Activated CD4-positive, alpha-beta T cell treated with anti-CD3 and anti-CD28 coated beads for 36 hours (primary cell): ENCODE measurements at regions of chr19 and their contacts with region 1.

Region 1: DNA sequence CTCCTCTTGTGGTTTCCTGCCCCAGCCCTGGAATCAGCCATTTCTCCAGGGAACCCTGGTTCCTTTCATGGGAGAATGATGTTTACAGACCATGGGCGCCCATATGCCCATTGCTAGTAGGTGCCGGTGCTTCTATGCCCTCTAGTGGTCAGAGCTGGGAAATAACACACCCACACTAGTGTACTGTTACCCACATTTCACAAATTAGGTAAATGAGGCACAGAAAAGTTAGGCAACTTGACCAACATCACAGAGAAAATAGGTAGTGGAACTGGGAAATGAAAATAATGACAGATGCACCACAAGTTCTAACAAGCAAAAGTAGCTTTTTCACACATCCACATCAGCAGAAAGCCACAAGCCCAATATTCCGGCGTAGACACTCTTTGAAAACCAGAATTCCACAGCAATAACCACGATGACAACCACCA is 1.3 kb upstream of the CEACAM3 start:
- DNase-seq: peak; percentile 77
- ATAC-seq: peak; percentile 94
- H3K4me3 Mint-ChIP-seq: no peak overlapping the region
- H3K27ac Mint-ChIP-seq: no peak overlapping the region
- H3K4me1 Mint-ChIP-seq: no peaks in the 10 kb centered on the region
- H3K27me3 Mint-ChIP-seq: peaks cover 23% of the 10 kb centered on the region

Region 2: DNA sequence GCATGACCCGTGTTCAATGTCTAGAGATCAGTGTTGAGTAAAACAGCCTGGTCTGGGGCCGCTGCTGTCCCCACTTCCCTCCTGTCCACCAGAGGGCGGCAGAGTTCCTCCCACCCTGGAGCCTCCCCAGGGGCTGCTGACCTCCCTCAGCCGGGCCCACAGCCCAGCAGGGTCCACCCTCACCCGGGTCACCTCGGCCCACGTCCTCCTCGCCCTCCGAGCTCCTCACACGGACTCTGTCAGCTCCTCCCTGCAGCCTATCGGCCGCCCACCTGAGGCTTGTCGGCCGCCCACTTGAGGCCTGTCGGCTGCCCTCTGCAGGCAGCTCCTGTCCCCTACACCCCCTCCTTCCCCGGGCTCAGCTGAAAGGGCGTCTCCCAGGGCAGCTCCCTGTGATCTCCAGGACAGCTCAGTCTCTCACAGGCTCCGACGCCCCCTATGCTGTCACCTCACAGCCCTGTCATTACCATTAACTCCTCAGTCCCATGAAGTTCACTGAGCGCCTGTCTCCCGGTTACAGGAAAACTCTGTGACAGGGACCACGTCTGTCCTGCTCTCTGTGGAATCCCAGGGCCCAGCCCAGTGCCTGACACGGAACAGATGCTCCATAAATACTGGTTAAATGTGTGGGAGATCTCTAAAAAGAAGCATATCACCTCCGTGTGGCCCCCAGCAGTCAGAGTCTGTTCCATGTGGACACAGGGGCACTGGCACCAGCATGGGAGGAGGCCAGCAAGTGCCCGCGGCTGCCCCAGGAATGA is 88.1 kb before region 1 on chr19:
- CTCF ChIA-PET with region 1: interaction called, 14 read pairs
- POLR2A ChIA-PET with region 1: no interaction called
- intact Hi-C with region 1: no loop called
- DNase-seq: peak; percentile 84
- ATAC-seq: peak; percentile 96
- H3K4me3 Mint-ChIP-seq: peak overlapping the region; percentile 28
- H3K27ac Mint-ChIP-seq: no peak overlapping the region
- H3K4me1 Mint-ChIP-seq: peaks cover 3% of the 10 kb centered on the region
- H3K27me3 Mint-ChIP-seq: peaks cover 26% of the 10 kb centered on the region

Region 3: DNA sequence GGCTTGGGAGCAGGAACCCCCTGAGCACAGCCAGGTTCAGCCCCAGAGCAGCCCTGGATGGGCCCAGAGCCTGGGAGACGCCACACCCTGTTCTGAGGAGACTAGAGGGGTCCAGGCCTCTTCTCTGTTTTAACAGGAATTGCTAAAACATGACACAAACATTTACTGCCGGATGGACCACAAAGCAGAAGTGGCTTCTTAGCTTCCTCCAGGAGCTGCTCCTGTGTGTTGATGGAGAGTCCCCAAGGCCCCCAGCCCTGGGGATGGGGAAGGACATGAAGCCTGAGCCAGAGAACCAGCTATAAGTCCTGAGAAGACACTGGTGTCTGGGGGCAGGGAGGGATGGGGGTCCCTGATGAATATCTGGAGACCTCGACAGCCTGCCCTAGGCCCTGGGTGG is 16.0 kb after region 1 on chr19:
- CTCF ChIA-PET with region 1: interaction called, 43 read pairs
- POLR2A ChIA-PET with region 1: no interaction called
- intact Hi-C with region 1: no loop called
- DNase-seq: no peak
- ATAC-seq: no peak
- H3K4me3 Mint-ChIP-seq: no peak overlapping the region
- H3K27ac Mint-ChIP-seq: no peak overlapping the region
- H3K4me1 Mint-ChIP-seq: no peaks in the 10 kb centered on the region
- H3K27me3 Mint-ChIP-seq: peaks cover 6% of the 10 kb centered on the region

Region 4: DNA sequence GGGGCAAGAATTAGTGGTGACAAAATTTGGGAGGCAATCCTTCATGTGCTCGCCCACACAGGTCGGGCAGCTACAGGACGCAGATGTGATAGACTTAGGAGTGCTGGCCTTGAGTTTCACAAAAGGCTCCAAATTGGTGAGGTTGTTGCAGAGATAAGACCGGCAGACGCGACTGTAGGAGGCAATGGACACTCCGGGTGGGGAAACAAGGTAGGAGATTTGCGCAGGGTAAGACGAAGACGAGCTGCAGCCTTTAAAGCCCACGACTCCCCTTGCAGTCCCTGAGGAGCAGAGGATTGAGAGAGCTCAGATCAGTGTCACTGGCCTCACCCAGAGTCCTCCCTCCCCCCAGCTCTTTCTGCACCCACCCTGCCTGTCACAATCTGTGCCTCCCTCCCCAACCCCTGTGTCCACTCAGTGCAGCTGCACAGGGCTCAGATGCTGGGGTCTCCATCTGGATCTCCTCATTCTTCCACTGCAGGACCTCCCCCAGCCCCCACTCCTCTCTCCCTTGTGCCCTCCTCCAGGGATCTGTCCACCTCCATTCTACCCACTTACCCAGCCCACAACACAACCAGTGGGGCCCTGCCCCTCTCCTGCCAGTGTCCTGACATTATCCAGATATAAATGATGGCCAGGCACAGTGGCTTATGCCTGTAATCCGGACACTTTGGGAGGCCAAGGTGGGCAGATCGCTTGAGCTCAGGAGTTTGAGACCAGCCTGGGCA is 43.1 kb after region 1 on chr19:
- CTCF ChIA-PET with region 1: interaction called, 34 read pairs
- POLR2A ChIA-PET with region 1: no interaction called
- intact Hi-C with region 1: loop called in 1 of 2 experiments (anchors 5 kb)
- DNase-seq: no peak
- ATAC-seq: no peak
- H3K4me3 Mint-ChIP-seq: no peak overlapping the region
- H3K27ac Mint-ChIP-seq: no peak overlapping the region
- H3K4me1 Mint-ChIP-seq: no peaks in the 10 kb centered on the region
- H3K27me3 Mint-ChIP-seq: peaks cover 19% of the 10 kb centered on the region

Region 5: DNA sequence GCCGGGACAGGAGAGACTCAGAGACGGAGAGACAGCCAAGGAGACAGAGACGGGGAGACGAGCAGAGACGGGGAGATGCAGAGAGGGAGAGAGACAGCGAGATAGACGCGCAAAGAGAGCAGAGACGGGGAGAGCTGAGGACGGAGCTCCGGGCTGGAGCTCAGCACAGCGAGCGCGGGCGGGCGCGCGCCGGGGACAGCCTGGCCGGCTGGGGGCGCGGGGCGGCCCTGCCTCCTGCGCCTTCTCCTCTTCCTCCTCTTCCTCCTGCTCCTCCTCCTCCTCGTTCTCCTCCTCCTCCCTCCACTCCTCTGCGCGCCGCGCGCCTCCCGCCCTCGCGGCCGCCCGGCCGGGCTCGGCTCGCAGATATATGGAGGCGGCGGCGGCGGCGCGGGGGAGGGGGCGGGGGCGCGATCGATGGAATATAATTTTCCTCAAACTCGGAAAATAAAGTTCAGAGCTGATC is 133.2 kb after region 1 on chr19 and contains the start of gene ERFL:
- CTCF ChIA-PET with region 1: no interaction called
- POLR2A ChIA-PET with region 1: no interaction called
- intact Hi-C with region 1: no loop called
- DNase-seq: peak; percentile 56
- ATAC-seq: peak; percentile 54
- H3K4me3 Mint-ChIP-seq: peak within 1 kb of the TSS; percentile 77
- H3K27ac Mint-ChIP-seq: peak within 1 kb of the TSS; percentile 81
- H3K4me1 Mint-ChIP-seq: peaks cover 20% of the 10 kb centered on the region
- H3K27me3 Mint-ChIP-seq: peaks cover 1% of the 10 kb centered on the region
- total RNA-seq, gene ERFL: 1.7 to 1.9 TPM

Region 6: GRCh38 chr19:41959056-41960053 is 164.3 kb after region 1 on chr19 and contains the start of gene RABAC1:
- CTCF ChIA-PET with region 1: interaction called, 4 read pairs
- POLR2A ChIA-PET with region 1: no interaction called
- intact Hi-C with region 1: loop called (anchors 5 kb)
- DNase-seq: peak; percentile 94
- ATAC-seq: peak; percentile 88
- H3K4me3 Mint-ChIP-seq: peak within 1 kb of the TSS; percentile 81
- H3K27ac Mint-ChIP-seq: peak within 1 kb of the TSS; percentile 87
- H3K4me1 Mint-ChIP-seq: peaks cover 16% of the 10 kb centered on the region
- H3K27me3 Mint-ChIP-seq: no peaks in the 10 kb centered on the region
- total RNA-seq, gene RABAC1: 35.3 to 49.7 TPM

Region 7: DNA sequence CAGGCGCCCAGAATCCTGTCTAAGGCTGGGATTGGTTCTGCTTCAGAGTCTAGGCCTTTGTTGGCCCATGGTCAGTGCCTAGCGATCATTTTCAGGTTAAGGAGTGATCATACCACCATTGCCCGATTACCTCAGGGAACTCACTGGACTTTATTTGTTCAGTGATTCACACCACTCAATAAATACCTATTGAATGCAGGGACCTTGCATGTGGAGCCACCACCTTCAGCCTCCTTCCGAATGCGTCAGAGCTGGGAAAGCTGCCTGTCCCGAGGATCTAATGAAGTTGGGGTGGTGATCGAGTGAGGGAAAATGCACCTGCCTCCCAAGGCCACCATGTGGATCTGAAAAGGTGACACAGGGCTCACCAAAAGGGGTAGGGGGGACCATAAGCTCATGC is 377.2 kb after region 1 on chr19:
- CTCF ChIA-PET with region 1: no interaction called
- POLR2A ChIA-PET with region 1: no interaction called
- intact Hi-C with region 1: no loop called
- DNase-seq: no peak
- ATAC-seq: no peak
- H3K4me3 Mint-ChIP-seq: no peak overlapping the region
- H3K27ac Mint-ChIP-seq: no peak overlapping the region
- H3K4me1 Mint-ChIP-seq: peaks cover 15% of the 10 kb centered on the region
- H3K27me3 Mint-ChIP-seq: peaks cover 20% of the 10 kb centered on the region